SK-N-SH (cell line): ENCODE measurements at regions of chr1 and their contacts with region 1.

Region 1: DNA sequence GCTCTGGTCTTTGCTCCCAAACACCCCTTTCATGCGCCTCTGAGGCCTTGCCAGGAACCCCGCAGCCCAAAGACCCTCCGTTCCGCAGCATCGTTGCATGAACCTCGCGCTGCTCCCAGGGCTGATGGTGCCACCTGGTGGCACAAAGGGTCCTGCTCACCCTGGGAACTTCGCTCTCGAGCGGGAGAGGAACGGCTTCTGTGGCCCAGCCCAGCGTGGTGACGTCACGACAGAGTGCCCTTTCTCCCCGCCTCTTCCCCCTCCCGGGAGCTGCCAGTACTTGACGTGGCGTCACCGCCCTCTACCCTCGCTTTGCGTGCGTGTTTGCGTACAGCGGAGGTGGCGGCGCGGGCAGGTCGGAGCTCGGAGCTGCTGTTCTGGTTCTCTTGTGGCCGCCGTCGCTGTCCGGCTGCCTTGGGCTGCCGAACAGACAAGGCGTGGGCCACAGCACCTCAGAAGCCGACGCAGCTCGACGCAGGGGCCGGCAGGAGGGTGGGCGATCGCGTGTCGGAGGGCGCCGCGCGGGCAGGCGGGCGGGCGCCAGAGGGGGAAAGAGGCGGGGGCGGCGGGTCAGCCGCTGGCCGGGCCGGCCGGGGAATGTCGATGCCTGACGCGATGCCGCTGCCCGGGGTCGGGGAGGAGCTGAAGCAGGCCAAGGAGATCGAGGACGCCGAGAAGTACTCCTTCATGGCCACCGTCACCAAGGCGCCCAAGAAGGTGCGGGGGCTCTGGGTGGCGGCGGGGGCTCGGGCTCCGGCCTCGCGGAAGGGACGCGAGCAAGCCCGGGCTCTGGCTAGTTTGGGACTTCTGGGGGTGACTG is at the start of gene AHCYL1:
- DNase-seq: peak; percentile 99
- H3K4me3 ChIP-seq: peak within 1 kb of the TSS; percentile 91 to 94
- H3K27ac ChIP-seq: peak within 1 kb of the TSS; percentile 89
- H3K4me1 ChIP-seq: peaks cover 19 to 25% of the 10 kb centered on the region in 2 experiments; a peak in 3 of 4 replicates
- H3K27me3 ChIP-seq: no peaks in the 10 kb centered on the region
- CTCF ChIP-seq: peak; percentile 96
- EP300 ChIP-seq: no peak
- RAD21 ChIP-seq: peak; percentile 99
- polyA plus RNA-seq, gene AHCYL1: 39.7 and 49.0 TPM in 2 replicates

Region 2: GRCh38 chr1:109649491-109649914 is 335.2 kb before region 1 on chr1:
- CTCF ChIA-PET with region 1: interaction called, 16 read pairs
- POLR2A ChIA-PET with region 1: no interaction called
- DNase-seq: peak; percentile 56
- H3K4me3 ChIP-seq: peak overlapping the region; percentile 34 to 52; a peak in 3 of 4 replicates
- H3K27ac ChIP-seq: peak overlapping the region in 1 of 2 experiments; percentile 90; a peak in 2 of 4 replicates
- H3K4me1 ChIP-seq: peaks cover 7 to 30% of the 10 kb centered on the region in 2 experiments
- H3K27me3 ChIP-seq: no peaks in the 10 kb centered on the region
- CTCF ChIP-seq: peak; percentile 57
- EP300 ChIP-seq: no peak
- RAD21 ChIP-seq: peak; percentile 81

Region 3: DNA sequence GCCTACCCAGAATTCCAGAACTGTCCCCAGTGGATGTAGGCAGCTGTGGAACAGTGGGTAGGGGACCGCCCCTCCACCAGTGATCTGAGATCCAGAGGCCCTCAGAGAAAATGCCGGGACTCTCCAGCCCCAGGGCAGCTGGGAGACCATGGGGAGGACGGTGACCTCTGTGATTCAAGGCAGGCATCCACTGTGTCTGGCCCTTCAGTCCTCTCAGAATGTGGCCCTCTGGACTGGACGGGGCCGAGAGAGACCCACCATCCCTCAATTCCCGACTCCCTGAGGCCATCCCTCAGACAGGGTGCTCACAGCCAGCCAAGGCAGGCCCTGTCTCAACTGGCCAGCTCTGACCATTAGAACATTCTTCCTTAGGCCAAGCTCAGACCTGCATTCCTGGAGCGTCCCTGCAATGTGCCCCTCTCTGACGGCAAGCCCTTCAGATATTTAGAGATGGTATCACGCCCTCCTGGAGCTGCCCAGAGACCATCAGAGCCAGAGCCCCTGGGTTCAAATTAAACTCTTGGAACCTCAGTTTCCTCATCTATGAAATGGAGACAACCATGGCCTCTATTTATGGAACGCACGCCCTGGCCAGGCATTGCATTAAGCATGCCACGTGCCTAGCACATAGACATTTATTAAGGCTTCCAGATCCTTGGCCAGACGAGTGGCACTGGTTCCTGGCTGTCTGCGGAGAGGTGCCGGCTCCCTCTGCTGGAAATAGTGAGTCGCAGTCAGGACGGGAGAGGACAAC is 211.3 kb before region 1 on chr1:
- CTCF ChIA-PET with region 1: interaction called, 822 read pairs
- POLR2A ChIA-PET with region 1: interaction called, 18 read pairs
- DNase-seq: peak; percentile 86
- H3K4me3 ChIP-seq: no peak overlapping the region; a peak in 1 of 4 replicates
- H3K27ac ChIP-seq: no peak overlapping the region
- H3K4me1 ChIP-seq: peaks cover 0 to 19% of the 10 kb centered on the region in 2 experiments; a peak in 1 of 4 replicates
- H3K27me3 ChIP-seq: no peaks in the 10 kb centered on the region
- CTCF ChIP-seq: peak; percentile 92
- EP300 ChIP-seq: no peak
- RAD21 ChIP-seq: peak; percentile 98

Region 4: GRCh38 chr1:109816175-109816811 is 168.4 kb before region 1 on chr1:
- CTCF ChIA-PET with region 1: interaction called, 13 read pairs
- POLR2A ChIA-PET with region 1: no interaction called
- DNase-seq: no peak
- H3K4me3 ChIP-seq: no peak overlapping the region
- H3K27ac ChIP-seq: no peak overlapping the region
- H3K4me1 ChIP-seq: peaks cover 4 to 7% of the 10 kb centered on the region in 2 experiments; a peak in 3 of 4 replicates
- H3K27me3 ChIP-seq: no peaks in the 10 kb centered on the region
- CTCF ChIP-seq: no peak
- EP300 ChIP-seq: no peak
- RAD21 ChIP-seq: no peak

Region 5: GRCh38 chr1:109931189-109931731 is 53.4 kb before region 1 on chr1:
- CTCF ChIA-PET with region 1: interaction called, 17 read pairs
- POLR2A ChIA-PET with region 1: no interaction called
- DNase-seq: peak; percentile 80
- H3K4me3 ChIP-seq: no peak overlapping the region
- H3K27ac ChIP-seq: peak overlapping the region in 1 of 2 experiments; percentile 47; a peak in 1 of 4 replicates
- H3K4me1 ChIP-seq: peaks cover 0 to 37% of the 10 kb centered on the region in 2 experiments; a peak in 2 of 4 replicates
- H3K27me3 ChIP-seq: no peaks in the 10 kb centered on the region
- CTCF ChIP-seq: no peak
- EP300 ChIP-seq: 0 out of 4 replicates have a peak, but pooled peaks of 1 of the 2 experiments have one; percentile 20
- RAD21 ChIP-seq: no peak

Region 6: GRCh38 chr1:110003747-110004630 is 19.3 kb after region 1 on chr1:
- CTCF ChIA-PET with region 1: interaction called, 30 read pairs
- POLR2A ChIA-PET with region 1: interaction called, 7 read pairs
- DNase-seq: no peak
- H3K4me3 ChIP-seq: peak overlapping the region; percentile 20 to 27; a peak in 3 of 4 replicates
- H3K27ac ChIP-seq: peak overlapping the region; percentile 77 to 92
- H3K4me1 ChIP-seq: peaks cover 26 to 30% of the 10 kb centered on the region in 2 experiments; a peak in 3 of 4 replicates
- H3K27me3 ChIP-seq: no peaks in the 10 kb centered on the region
- CTCF ChIP-seq: no peak
- EP300 ChIP-seq: 0 out of 4 replicates have a peak, but pooled peaks of 1 of the 2 experiments have one; percentile 33
- RAD21 ChIP-seq: no peak

Region 7: GRCh38 chr1:110053557-110054428 is 69.1 kb after region 1 on chr1:
- CTCF ChIA-PET with region 1: interaction called, 13 read pairs
- POLR2A ChIA-PET with region 1: no interaction called
- DNase-seq: peak; percentile 71
- H3K4me3 ChIP-seq: no peak overlapping the region; a peak in 1 of 4 replicates
- H3K27ac ChIP-seq: peak overlapping the region in 1 of 2 experiments; percentile 93; a peak in 2 of 4 replicates
- H3K4me1 ChIP-seq: peaks cover 60 to 79% of the 10 kb centered on the region in 2 experiments
- H3K27me3 ChIP-seq: no peaks in the 10 kb centered on the region
- CTCF ChIP-seq: peak; percentile 96
- EP300 ChIP-seq: no peak
- RAD21 ChIP-seq: peak; percentile 98